HEK293 (cell line): ENCODE measurements at regions of chr19 and their contacts with region 1.

Region 1: DNA sequence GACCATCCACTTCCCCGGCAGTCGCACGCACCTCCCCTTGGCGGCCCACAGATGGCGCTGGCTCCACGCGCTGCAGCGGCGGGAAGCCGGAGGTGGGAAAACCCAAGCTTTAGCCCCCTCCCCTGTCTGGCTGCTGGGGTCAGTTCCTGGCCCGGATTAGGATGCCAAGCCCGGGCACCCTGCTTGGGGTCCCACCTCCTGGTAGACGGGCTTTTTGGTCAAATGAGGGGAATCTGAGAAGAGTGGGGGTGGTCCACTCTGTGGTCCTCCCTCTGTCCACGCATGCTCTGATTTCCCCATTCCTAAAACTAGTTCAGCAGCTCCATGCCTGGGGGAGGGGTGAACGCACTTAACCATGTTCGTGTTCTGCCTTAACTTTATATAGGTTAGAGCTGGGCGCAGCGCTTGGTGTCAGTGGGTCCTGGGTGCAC is 8.1 kb upstream of the ADGRE2 start:
- H3K4me3 ChIP-seq: no peak overlapping the region
- H3K27ac ChIP-seq: no peak overlapping the region
- H3K4me1 ChIP-seq: no peaks in the 10 kb centered on the region
- CTCF ChIP-seq: peak; percentile 57

Region 2: DNA sequence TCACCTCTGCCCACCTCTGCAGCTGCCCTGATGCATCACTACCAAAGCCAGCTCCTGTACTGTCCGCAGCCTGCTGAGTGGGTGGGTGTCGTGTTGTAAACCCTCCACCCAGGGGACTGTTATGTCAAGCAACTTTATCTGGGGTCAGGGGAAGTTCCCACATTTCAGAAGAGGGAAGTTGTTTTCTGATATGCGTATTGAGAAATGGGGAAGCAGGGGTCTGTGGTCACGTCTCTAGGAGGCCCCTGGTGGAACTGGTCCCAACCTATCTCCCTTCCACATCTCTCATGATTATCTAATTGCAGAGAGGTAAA is 172.4 kb before region 1 on chr19:
- CTCF ChIA-PET with region 1: no interaction called
- POLR2A ChIA-PET with region 1: no interaction called
- H3K4me3 ChIP-seq: no peak overlapping the region
- H3K27ac ChIP-seq: no peak overlapping the region
- H3K4me1 ChIP-seq: no peaks in the 10 kb centered on the region
- CTCF ChIP-seq: no peak

Region 3: GRCh38 chr19:14775869-14776586 is 10.4 kb before region 1 on chr19:
- CTCF ChIA-PET with region 1: interaction called, 19 read pairs
- POLR2A ChIA-PET with region 1: no interaction called
- H3K4me3 ChIP-seq: peak overlapping the region; percentile 32; the same call in 1 of the 2 replicates
- H3K27ac ChIP-seq: no peak overlapping the region
- H3K4me1 ChIP-seq: no peaks in the 10 kb centered on the region; the same call in 1 of the 2 replicates
- CTCF ChIP-seq: no peak

Region 4: GRCh38 chr19:14890643-14891379 is 104.4 kb after region 1 on chr19:
- CTCF ChIA-PET with region 1: interaction called, 17 read pairs
- POLR2A ChIA-PET with region 1: no interaction called
- H3K4me3 ChIP-seq: no peak overlapping the region
- H3K27ac ChIP-seq: no peak overlapping the region
- H3K4me1 ChIP-seq: no peaks in the 10 kb centered on the region
- CTCF ChIP-seq: no peak